ENCODE measurements at regions of chr7 and their contacts with region 1.

Region 1: GRCh38 chr7:78111386-78111785 is 312.8 kb downstream of the PHTF2 start:
- DNase-seq: no peak
- H3K4me3 ChIP-seq: no peak overlapping the region
- H3K27ac ChIP-seq: no peak overlapping the region
- H3K4me1 ChIP-seq: no peaks in the 10 kb centered on the region
- H3K27me3 ChIP-seq: no peaks in the 10 kb centered on the region
- CTCF ChIP-seq: no peak
- EP300 ChIP-seq: no peak
- POLR2A ChIP-seq: no peak

Region 2: DNA sequence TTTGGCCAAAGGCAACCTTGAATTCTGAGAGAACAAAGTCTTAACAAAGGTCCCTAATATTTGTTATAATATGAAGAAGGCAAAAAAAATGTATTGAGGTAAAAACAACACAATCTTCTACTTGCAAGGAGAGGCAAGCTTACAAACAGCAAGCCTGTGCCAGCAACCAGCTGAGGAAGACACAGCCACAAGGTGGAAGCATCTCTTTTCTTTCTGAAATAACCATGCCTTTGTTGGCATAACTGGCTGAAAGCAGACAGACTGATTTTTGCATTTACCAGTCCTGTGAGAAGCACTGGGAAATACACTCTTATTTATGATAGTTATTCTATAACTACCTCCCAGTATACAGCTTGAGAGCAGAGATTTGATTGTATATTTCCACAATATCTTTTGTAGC is 20.8 kb before region 1 on chr7:
- in situ Hi-C with region 1: no loop called
- intact Hi-C with region 1: loop called (anchors 1 kb)
- DNase-seq: no peak
- H3K4me3 ChIP-seq: no peak overlapping the region
- H3K27ac ChIP-seq: no peak overlapping the region
- H3K4me1 ChIP-seq: no peaks in the 10 kb centered on the region
- H3K27me3 ChIP-seq: no peaks in the 10 kb centered on the region
- CTCF ChIP-seq: no peak
- EP300 ChIP-seq: no peak
- POLR2A ChIP-seq: no peak

Region 3: DNA sequence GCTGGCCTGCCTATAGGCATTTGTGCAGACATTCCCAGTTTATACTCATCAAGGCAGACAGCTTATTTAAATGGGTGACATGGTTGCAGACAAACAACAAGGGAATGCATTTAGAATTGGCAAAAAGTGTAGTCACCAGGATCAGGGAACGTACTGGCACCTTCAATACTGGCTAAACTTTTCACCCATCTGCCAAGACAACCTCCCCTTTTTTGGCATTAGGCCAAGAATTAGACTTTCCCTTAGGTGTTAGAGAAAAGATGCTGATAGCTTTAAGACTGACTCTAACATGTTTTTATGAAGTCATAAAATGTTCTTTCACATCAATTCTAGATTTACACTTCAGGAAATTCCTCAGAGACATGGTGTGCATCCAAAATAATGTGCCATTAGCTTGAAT is 53.1 kb after region 1 on chr7:
- in situ Hi-C with region 1: no loop called
- intact Hi-C with region 1: no loop called
- DNase-seq: no peak
- H3K4me3 ChIP-seq: no peak overlapping the region
- H3K27ac ChIP-seq: no peak overlapping the region
- H3K4me1 ChIP-seq: no peaks in the 10 kb centered on the region
- H3K27me3 ChIP-seq: no peaks in the 10 kb centered on the region
- CTCF ChIP-seq: no peak
- EP300 ChIP-seq: no peak
- POLR2A ChIP-seq: no peak